Activated CD8-positive, alpha-beta T cell treated with anti-CD3 and anti-CD28 coated beads, Interleukin-2, amount 10 ng/mL, durations not matched to agents 7 days and 5 days (primary cell): ENCODE measurements at regions of chr1 and their contacts with region 1.

Region 1: DNA sequence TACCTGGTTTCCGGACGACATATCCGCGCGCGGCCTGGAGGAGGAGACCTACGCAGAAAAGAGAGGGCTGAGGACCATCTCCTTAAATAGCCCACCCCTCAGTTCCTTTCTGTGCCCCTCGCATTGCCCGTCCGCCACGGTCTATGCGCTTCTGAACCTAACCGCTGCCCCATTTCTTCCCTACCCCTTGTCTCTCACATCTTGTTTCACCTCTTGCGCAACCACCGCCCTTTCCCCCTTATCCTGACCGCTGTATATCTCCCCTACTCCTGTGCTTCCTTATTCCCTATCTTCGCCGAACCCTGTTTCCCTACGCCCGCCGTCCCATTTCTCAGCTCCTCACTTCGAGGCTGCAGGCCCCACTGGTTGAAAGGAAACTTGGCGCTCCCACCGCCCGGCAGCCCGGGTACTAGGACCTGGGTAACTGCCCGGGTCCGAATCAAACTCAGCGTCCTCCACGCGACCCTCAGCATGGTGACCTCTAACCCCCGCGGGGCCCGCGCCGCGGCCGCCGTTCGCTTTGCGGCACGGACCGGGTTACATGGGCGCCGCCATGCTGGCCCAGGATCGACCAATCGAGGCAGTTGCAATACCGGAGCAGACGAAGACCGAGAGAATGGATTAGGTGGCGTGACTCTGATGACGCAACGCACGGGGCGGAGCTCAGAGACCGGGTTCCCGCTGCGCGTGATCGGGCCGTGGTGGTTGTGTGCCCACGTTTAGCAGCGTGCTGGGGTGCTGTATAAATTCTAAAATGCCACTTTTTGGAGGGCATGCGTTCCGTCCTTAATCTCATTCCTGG is at the start of gene MRPS15:
- DNase-seq: peak; percentile 98
- ATAC-seq: peak; percentile 94
- H3K4me3 Mint-ChIP-seq: peak within 1 kb of the TSS; percentile 100
- H3K27ac Mint-ChIP-seq: peak within 1 kb of the TSS; percentile 99
- H3K4me1 Mint-ChIP-seq: peaks cover 61% of the 10 kb centered on the region
- H3K27me3 Mint-ChIP-seq: no peaks in the 10 kb centered on the region
- total RNA-seq, gene MRPS15: 115 TPM

Region 2: DNA sequence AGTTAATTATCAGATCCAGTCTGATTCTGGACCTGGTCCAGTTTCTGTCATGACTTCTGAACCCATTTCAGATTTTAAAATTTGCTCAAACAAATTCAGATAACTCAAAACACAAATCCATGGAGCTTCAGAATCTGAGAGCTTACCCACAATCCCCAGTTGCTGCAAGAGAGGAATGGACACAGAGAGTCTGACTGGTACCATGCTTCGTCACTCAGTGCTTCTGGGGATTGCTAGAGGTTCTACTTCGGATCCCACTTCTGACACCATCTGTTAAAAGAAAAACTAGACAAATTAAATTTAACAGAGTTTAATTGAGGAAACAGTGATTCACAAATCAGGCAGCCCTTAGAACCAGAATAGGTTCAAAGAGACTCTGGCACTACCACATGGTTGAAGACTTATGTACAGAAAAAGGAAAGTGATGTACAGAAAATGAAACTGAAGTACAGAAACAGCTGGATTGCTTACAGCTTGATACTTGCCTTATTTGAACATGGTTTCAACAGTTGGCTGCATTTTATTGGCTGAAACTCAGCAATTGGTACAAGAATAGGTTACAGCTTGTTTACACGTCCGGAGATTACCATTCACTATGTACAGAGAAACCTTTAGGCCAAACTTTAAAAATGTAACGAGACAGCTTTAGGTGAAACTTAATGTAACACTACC is 440.8 kb before region 1 on chr1:
- CTCF ChIA-PET with region 1: no interaction called
- POLR2A ChIA-PET with region 1: no interaction called
- DNase-seq: no peak
- ATAC-seq: peak; percentile 76
- H3K4me3 Mint-ChIP-seq: peak overlapping the region; percentile 12
- H3K27ac Mint-ChIP-seq: peak overlapping the region; percentile 65
- H3K4me1 Mint-ChIP-seq: peaks cover 16% of the 10 kb centered on the region
- H3K27me3 Mint-ChIP-seq: no peaks in the 10 kb centered on the region

Region 3: GRCh38 chr1:36397378-36398230 is 66.4 kb before region 1 on chr1 and contains the start of gene LSM10:
- CTCF ChIA-PET with region 1: no interaction called
- POLR2A ChIA-PET with region 1: no interaction called
- DNase-seq: peak; percentile 95
- ATAC-seq: peak; percentile 94
- H3K4me3 Mint-ChIP-seq: peak within 1 kb of the TSS; percentile 94
- H3K27ac Mint-ChIP-seq: peak within 1 kb of the TSS; percentile 96
- H3K4me1 Mint-ChIP-seq: peaks cover 43% of the 10 kb centered on the region
- H3K27me3 Mint-ChIP-seq: no peaks in the 10 kb centered on the region
- total RNA-seq, gene LSM10: 44.7 to 47.5 TPM

Region 4: DNA sequence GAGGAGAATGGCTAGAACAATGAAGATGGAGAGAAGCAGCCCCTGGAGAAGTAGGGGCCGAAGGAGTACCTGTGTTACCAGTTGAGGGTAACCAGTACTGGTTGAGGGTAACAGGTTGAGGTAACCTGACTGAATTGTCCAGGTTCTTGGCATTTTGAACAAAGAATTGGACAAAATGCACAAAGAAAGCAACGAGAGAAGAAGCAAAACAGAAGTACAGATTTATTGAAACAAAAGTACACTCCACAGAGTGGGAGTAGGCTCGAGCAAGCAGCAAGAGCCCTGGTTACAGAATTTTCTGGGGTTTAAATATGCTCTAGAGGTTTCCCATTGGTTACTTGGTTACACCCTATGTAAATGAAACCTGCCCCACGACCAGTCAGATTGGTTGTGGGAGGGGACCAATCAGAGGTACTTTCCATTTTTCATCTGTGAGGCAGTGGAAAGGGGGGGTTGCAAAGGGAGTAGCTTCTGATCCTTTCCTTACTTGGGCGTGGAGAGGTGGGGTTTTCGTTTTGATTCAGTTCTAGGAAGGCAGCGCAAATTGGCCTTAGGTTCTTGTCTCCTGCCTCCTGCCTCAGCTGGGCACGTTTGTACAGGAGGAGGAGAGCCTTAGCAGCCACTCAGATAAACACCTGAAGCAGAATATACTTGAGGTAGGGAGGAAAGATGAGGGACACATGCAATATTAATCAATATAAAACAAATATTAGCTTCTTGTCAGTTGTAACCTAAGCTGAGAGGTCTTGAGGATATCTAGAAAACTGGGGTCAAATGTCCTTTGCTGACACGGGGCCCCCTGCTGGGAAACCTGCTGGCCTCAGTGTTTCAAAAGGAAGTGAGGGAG is 52.1 kb before region 1 on chr1:
- CTCF ChIA-PET with region 1: no interaction called
- POLR2A ChIA-PET with region 1: no interaction called
- DNase-seq: peak; percentile 75
- ATAC-seq: peak; percentile 94
- H3K4me3 Mint-ChIP-seq: peak overlapping the region; percentile 25
- H3K27ac Mint-ChIP-seq: peak overlapping the region; percentile 86
- H3K4me1 Mint-ChIP-seq: peaks cover 23% of the 10 kb centered on the region
- H3K27me3 Mint-ChIP-seq: peaks cover 2% of the 10 kb centered on the region

Region 5: DNA sequence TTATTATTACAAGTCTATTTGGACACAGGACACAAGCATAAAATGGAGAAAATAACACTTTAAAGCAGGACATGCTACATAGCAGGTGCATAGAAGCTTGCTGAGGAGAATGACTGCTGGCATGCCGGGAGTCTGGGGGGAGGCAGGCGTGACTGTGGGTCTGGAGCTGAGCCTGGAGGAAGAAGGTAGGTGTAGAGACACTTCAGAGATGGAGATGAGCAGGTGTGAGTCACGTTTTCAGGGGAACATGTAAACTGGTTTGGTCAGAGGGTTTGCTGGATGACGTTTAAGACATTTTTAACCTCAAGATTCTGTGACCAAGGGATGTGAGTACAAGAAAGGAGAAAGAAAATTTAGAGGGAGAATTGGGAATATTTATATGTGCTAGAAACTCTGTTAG is 38.2 kb before region 1 on chr1:
- CTCF ChIA-PET with region 1: no interaction called
- POLR2A ChIA-PET with region 1: no interaction called
- DNase-seq: no peak
- ATAC-seq: no peak
- H3K4me3 Mint-ChIP-seq: no peak overlapping the region
- H3K27ac Mint-ChIP-seq: no peak overlapping the region
- H3K4me1 Mint-ChIP-seq: peaks cover 9% of the 10 kb centered on the region
- H3K27me3 Mint-ChIP-seq: peaks cover under 1% of the 10 kb centered on the region

Region 6: GRCh38 chr1:36450270-36450918 is 13.6 kb before region 1 on chr1 and contains the start of gene OSCP1:
- CTCF ChIA-PET with region 1: interaction called, 9 read pairs
- POLR2A ChIA-PET with region 1: interaction called, 21 read pairs
- DNase-seq: peak; percentile 91
- ATAC-seq: peak; percentile 99
- H3K4me3 Mint-ChIP-seq: peak within 1 kb of the TSS; percentile 87
- H3K27ac Mint-ChIP-seq: peak within 1 kb of the TSS; percentile 91
- H3K4me1 Mint-ChIP-seq: peaks cover 27% of the 10 kb centered on the region
- H3K27me3 Mint-ChIP-seq: no peaks in the 10 kb centered on the region
- total RNA-seq, gene OSCP1: 0.66 to 1.9 TPM